Dorsolateral prefrontal cortex (tissue), 120 donors: ENCODE measurements at regions of chr21 and their contacts with region 1.

Region 1: DNA sequence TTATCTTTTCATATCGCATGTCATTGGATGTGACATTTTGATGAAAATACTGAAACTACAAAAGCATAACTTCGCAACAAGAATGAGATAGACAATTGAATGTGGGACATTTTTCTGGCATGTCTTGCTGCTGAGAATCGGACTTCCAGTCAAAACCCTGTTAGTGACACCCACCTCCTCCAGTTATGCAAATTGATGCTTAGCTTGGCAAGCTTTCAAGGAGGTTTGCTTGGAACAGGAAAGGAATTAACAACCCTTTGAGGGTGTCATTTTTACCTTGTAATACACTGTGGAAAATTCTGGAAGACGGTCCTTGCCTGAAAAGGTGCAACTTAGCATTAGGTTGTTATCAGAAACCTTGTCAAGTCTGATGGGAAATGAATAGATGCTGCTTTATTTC is 38.8 kb upstream of the FAM3B start:
- DNase-seq: no peak
- H3K4me3 ChIP-seq: no peak overlapping the region
- H3K27ac ChIP-seq: no peak overlapping the region
- H3K27me3 ChIP-seq: peaks cover 0 to 30% (median 0%) of the 10 kb centered on the region in 45 donors
- CTCF ChIP-seq: no peak

Region 2: GRCh38 chr21:41217671-41218660 is 59.9 kb before region 1 on chr21:
- intact Hi-C with region 1: no loop called
- DNase-seq: no peak
- H3K4me3 ChIP-seq: no peak overlapping the region
- H3K27ac ChIP-seq: no peak overlapping the region
- H3K27me3 ChIP-seq: no peaks in the 10 kb centered on the region
- CTCF ChIP-seq: no peak

Region 3: DNA sequence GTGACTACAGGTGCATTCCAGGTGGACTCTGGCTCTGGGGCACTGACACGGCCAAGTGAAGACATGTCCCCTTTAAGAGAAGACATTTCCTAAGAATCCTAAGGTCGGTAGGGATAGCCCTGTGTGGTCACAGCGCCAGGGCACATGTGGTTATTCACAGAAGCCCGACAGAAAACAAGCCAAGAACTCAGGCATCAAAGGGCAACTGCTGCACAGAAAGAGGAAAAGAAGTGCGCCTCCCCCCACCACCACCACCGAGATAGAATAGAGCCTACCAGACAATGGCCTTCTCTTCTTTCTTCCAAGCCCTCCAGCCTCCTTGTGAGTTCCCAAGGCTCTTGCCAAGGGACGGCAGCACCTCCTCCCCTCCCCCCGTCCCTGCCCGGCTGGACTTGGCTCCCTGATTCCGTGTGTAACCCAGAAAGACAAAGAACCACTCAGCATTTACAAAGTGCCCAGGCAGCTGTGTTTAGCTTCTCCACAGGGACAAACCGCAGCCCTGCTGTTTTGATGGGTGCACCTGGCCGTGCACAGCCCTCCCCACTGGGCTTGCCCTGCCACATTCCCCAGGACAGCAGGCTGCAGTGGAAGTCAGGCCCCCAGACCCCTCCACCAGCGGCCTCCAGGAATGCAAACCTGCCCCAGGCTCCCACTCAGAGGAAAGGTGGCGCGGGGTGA is 199.9 kb after region 1 on chr21:
- intact Hi-C with region 1: no loop called
- DNase-seq: peak in 5 of 10 donors; percentile 16 to 57 (median 45)
- H3K4me3 ChIP-seq: no peak overlapping the region
- H3K27ac ChIP-seq: no peak overlapping the region
- H3K27me3 ChIP-seq: peaks cover 0 to 5% (median 0%) of the 10 kb centered on the region in 45 donors
- CTCF ChIP-seq: no peak

Region 4: GRCh38 chr21:41622831-41623548 is 345.1 kb after region 1 on chr21:
- intact Hi-C with region 1: loop called in 1 of 2 experiments (anchors 10 kb)
- DNase-seq: no peak
- H3K4me3 ChIP-seq: no peak overlapping the region
- H3K27ac ChIP-seq: no peak overlapping the region
- H3K27me3 ChIP-seq: peaks cover 0 to 10% (median 0%) of the 10 kb centered on the region in 45 donors
- CTCF ChIP-seq: no peak